Dorsolateral prefrontal cortex (tissue), 120 donors: ENCODE measurements at regions of chr10 and their contacts with region 1.

Region 1: GRCh38 chr10:101067356-101068083 is 5.7 kb downstream of the KAZALD1 start:
- DNase-seq: peak in 9 of 10 donors; percentile 48 to 78 (median 66)
- H3K4me3 ChIP-seq: peak overlapping the region; percentile 22 to 76 (median 57)
- H3K27ac ChIP-seq: peak overlapping the region in 8 of 59 donors; percentile 2 to 57 (median 29)
- H3K27me3 ChIP-seq: peaks cover 0 to 61% (median 40%) of the 10 kb centered on the region in 45 donors
- CTCF ChIP-seq: peak; percentile 80 to 99 (median 96)

Region 2: DNA sequence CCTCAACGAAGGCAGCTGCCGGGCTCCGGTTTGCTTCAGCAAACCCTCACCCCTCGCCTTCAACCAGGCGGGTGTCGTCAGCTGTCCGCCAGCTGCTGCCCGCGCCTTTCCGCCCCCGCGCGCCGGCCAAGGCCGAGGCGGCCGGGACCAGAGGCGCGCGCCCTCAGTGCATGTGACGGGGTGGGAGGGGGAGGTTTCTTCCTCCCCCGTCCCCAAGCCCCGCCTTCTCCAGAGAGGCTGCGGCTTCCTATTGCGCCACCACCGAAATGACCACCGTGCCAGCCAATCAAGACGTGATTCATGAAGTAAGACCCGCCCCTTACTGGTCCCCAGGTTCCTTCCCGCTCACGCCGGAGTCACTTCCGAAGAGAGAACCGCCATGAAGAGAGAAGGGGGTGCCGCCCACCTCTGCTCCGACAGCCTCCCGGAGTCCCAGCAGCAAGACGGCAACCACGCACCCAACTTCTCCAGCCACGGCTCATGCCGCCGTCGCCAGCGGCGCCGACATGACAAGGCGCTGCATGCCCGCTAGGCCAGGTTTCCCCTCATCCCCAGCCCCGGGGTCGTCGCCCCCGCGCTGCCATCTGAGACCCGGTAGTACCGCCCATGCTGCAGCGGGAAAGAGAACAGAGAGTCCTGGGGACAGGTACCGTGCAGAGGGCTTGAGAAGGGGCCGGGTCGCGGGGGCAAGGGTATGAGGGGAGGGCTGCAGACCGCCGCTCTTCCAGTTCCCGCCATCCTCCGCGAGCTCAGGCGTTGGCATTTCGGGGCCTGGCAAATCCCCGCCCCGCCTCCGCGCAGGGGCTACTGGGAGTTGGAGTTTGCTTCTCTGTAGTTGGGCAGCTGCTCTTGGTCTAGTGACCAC is 154.7 kb before region 1 on chr10 and contains the start of gene SLF2:
- intact Hi-C with region 1: no loop called
- DNase-seq: peak; percentile 95 to 99 (median 99)
- H3K4me3 ChIP-seq: peak within 1 kb of the TSS; percentile 39 to 100 (median 96)
- H3K27ac ChIP-seq: peak within 1 kb of the TSS; percentile 90 to 100 (median 98)
- H3K27me3 ChIP-seq: no peaks in the 10 kb centered on the region
- CTCF ChIP-seq: peak in 20 of 56 donors; percentile 1 to 49 (median 20)
- total RNA-seq, gene SLF2: 32.8 to 92.3 (median 49.6) TPM

Region 3: GRCh38 chr10:101018600-101019439 is 48.7 kb before region 1 on chr10:
- intact Hi-C with region 1: loop called (anchors 2 to 10 kb)
- DNase-seq: peak; percentile 60 to 92 (median 88)
- H3K4me3 ChIP-seq: peak overlapping the region in 11 of 59 donors; percentile 3 to 35 (median 9)
- H3K27ac ChIP-seq: peak overlapping the region in 21 of 59 donors; percentile 1 to 64 (median 27)
- H3K27me3 ChIP-seq: no peaks in the 10 kb centered on the region
- CTCF ChIP-seq: peak in 55 of 56 donors; percentile 31 to 90 (median 78)

Region 4: GRCh38 chr10:101031128-101031795 is 36.3 kb before region 1 on chr10 and contains the starts of genes PDZD7 and SFXN3:
- intact Hi-C with region 1: loop called in 1 of 2 experiments (anchors 5 kb)
- DNase-seq: peak; percentile 96 to 99 (median 98)
- H3K4me3 ChIP-seq: peak within 1 kb of the TSS; percentile 55 to 100 (median 92)
- H3K27ac ChIP-seq: peak within 1 kb of the TSS; percentile 93 to 100 (median 99)
- H3K27me3 ChIP-seq: no peaks in the 10 kb centered on the region
- CTCF ChIP-seq: peak in 14 of 56 donors; percentile 2 to 43 (median 22)
- total RNA-seq, gene PDZD7: 11.3 to 42.8 (median 23.8) TPM
- total RNA-seq, gene SFXN3: 53.8 to 127 (median 83.8) TPM

Region 5: GRCh38 chr10:101041252-101041761 is 26.2 kb before region 1 on chr10:
- intact Hi-C with region 1: loop called in 1 of 2 experiments (anchors 1 kb)
- DNase-seq: peak; percentile 68 to 91 (median 83)
- H3K4me3 ChIP-seq: no peak overlapping the region
- H3K27ac ChIP-seq: peak overlapping the region in 24 of 59 donors; percentile 2 to 89 (median 70)
- H3K27me3 ChIP-seq: peaks cover 0 to 4% (median 0%) of the 10 kb centered on the region in 45 donors
- CTCF ChIP-seq: peak; percentile 58 to 94 (median 88)

Region 6: GRCh38 chr10:101130984-101131961 is 63.8 kb after region 1 on chr10 and contains the start of gene TLX1:
- intact Hi-C with region 1: no loop called
- DNase-seq: no peak
- H3K4me3 ChIP-seq: peak within 1 kb of the TSS in 41 of 59 donors; percentile 4 to 58 (median 36)
- H3K27ac ChIP-seq: no peak within 1 kb of the TSS
- H3K27me3 ChIP-seq: peaks cover 19 to 100% (median 97%) of the 10 kb centered on the region in 45 donors
- CTCF ChIP-seq: no peak
- total RNA-seq, gene TLX1: not detected